ENCODE measurements at regions of chr1 and their contacts with region 1.

Region 1: GRCh38 chr1:196651637-196652215 is at the start of gene CFH:
- DNase-seq: no peak
- H3K4me3 ChIP-seq: peak within 1 kb of the TSS in 47 of 59 donors; percentile 3 to 51 (median 28)
- H3K27ac ChIP-seq: peak within 1 kb of the TSS in 9 of 59 donors; percentile 3 to 56 (median 23)
- H3K27me3 ChIP-seq: peaks cover 0 to 7% (median 0%) of the 10 kb centered on the region in 45 donors
- CTCF ChIP-seq: no peak
- total RNA-seq, gene CFH: 6.5 to 77.9 (median 23.3) TPM

Region 2: DNA sequence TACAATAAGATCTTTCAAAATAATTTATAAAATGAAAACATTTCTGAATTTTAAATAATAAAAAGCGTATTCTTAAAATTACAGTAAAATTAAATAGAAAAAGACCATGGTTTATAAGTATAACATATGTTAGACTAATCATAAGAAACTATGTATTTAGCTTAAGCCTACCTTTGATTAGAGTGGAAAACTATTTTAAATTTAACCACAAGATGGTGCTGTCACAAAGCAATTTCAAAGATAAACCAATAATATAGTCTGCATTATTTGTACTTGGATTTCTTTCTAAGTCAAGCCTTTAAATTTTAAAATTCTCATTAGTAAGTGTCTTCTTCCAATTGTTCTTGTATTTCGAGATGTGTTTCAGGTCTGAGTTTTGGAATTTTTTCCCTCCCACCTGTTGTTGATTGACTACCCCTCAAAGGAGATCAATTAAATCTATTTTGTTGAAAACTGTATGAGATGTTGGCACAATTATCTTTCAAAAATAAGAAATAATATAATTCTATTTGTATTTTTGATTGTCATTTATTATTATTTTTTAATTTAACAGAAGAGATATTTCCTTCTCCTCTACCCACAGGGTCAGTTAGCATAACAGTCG is 503.3 kb before region 1 on chr1:
- intact Hi-C with region 1: loop called in 1 of 2 experiments (anchors 10 kb)
- DNase-seq: no peak
- H3K4me3 ChIP-seq: no peak overlapping the region
- H3K27ac ChIP-seq: no peak overlapping the region
- H3K27me3 ChIP-seq: no peaks in the 10 kb centered on the region
- CTCF ChIP-seq: peak; percentile 51 to 83 (median 70)

Region 3: DNA sequence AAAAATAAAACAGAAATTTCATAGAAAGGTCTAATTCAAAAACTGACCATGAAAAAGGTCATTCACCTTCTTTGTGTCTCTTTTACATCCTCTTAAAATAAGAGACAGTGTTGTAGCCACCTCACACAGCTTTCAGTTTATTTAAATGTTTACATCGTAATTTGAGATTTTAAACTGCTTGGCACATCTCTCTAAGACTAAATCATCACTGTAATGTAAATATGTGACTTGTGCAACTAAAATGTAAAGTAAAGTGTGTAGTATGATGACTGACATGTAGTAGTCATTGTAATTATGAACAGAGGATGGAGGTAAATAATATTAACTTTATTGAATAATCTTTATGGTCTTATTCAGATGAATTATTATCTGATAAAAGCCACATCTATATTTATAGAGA is 327.4 kb before region 1 on chr1:
- intact Hi-C with region 1: loop called in 1 of 2 experiments (anchors 10 kb)
- DNase-seq: no peak
- H3K4me3 ChIP-seq: no peak overlapping the region
- H3K27ac ChIP-seq: no peak overlapping the region
- H3K27me3 ChIP-seq: no peaks in the 10 kb centered on the region
- CTCF ChIP-seq: no peak

Region 4: DNA sequence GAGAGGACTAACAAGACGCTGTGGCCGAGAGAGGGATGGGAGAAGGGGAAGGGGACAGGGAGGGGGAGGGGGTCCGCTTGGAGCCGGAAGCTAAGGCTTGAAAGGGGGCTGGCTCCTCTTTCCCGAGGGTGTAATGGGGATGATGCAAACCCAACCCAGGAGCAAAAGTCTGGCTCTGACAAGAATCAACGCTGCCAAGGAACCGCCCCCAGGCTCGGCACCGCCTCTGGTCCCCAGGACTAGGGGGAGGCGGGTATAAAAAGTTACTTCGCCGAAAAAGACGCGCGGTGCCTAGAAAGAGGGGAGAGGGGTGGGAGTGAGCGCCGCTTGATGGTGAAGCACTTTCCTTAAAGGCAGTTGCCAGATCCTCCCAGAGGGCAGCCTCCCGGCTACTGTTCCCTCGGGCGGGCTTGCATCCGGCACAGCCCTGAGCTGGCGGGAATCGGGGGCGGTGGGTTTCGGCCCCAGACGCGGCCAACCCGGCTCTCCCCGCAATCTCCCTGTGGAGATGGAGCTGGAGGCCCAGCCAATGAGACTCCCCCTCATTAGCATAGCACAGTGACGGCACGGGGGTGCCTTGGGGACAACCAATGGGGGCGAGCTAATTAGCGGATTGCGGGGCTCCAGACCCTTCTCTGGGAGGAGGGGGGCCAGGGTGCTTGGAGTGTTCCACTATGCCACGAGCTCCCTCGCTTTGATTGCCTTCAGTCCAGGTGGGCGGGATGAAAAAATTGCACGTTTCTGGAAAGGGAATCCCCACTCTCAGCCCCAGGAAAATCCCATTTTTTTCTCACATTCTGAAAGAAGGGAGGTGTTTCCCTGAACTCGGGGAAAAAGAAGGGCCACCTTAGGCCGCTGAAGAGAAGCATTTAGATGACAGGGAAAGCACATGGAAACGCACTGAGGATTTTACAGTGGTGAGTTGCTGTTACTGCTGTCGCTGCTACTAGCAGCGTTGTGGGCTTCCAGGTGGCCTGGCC is 43.0 kb before region 1 on chr1 and contains the start of gene KCNT2:
- intact Hi-C with region 1: no loop called
- DNase-seq: peak in 8 of 10 donors; percentile 22 to 56 (median 42)
- H3K4me3 ChIP-seq: peak within 1 kb of the TSS; percentile 14 to 77 (median 64)
- H3K27ac ChIP-seq: peak within 1 kb of the TSS in 47 of 59 donors; percentile 0 to 84 (median 52)
- H3K27me3 ChIP-seq: peaks cover 0 to 28% (median 0%) of the 10 kb centered on the region in 45 donors
- CTCF ChIP-seq: no peak
- total RNA-seq, gene KCNT2: 6.1 to 25.4 (median 15.7) TPM

Region 5: DNA sequence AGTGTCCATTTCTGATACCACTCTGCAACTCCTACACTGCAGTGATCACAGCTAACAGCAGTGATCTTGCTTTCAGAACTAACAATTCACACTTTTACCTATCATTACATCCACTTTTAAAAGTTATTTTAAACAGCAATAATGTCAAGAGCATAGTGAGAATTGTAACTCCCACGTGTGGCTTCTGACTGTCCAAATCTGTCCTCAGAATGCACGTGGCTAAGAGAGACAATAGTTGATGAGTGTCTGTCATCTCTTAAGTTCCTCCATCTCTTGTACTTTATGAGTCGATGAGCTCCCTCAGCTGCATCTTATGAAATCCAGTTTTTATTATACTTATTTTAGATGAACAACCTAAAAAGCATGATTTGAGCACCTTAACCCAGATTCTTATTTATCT is 309.1 kb after region 1 on chr1:
- intact Hi-C with region 1: no loop called
- DNase-seq: no peak
- H3K4me3 ChIP-seq: no peak overlapping the region
- H3K27ac ChIP-seq: no peak overlapping the region
- H3K27me3 ChIP-seq: no peaks in the 10 kb centered on the region
- CTCF ChIP-seq: no peak

Measured in dorsolateral prefrontal cortex (tissue), 120 donors.